Activated CD4-positive, alpha-beta T cell treated with anti-CD3 and anti-CD28 coated beads for 36 hours (primary cell): ENCODE measurements at regions of chr14 and their contacts with region 1.

Region 1: GRCh38 chr14:105093431-105094192 is 28.4 kb upstream of the GPR132 start:
- DNase-seq: peak; percentile 88
- ATAC-seq: peak; percentile 71
- H3K4me3 Mint-ChIP-seq: peak overlapping the region; percentile 65
- H3K27ac Mint-ChIP-seq: peak overlapping the region; percentile 31
- H3K4me1 Mint-ChIP-seq: peaks cover 5% of the 10 kb centered on the region
- H3K27me3 Mint-ChIP-seq: no peaks in the 10 kb centered on the region

Region 2: DNA sequence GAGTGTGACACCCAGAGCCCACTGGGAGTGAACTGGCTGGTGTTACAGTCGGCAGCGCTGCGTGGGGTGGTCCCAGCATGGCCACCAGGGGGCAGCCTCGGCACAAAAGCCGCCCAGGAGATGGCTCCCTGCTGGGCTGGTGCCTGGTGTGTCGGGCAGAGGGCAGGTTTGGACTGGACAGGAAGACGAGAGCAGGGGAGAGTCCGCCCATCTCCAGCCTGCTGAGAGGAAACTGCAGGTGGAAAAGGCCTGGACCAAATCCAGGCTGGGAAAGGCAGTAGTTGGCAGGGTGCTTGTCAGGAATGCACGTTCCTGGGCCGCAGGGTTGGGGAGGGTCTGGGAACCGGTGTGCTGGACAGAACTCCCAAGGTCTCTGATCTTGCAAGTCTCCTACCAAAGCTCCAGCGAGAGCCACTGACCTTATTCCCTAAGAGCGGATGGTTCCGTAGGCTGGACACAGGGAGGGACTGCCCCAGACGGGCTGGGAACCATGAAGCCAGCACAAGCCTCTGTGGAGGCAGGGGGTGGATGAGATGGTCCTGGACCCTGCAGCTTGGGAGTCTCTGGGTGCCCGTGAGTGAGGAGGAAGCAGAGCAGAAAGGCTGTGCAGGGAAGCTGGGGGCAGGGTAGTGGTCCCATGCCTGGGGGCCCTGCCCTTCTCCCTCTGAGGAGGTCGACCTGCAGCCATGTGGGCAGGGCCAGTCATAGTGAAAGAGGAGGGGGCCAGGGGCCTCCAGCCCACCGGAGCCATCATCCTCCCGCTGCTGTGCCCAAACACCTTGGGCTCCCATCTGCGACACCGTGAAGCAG is 117.2 kb before region 1 on chr14:
- CTCF ChIA-PET with region 1: no interaction called
- POLR2A ChIA-PET with region 1: no interaction called
- intact Hi-C with region 1: no loop called
- DNase-seq: peak; percentile 92
- ATAC-seq: peak; percentile 86
- H3K4me3 Mint-ChIP-seq: peak overlapping the region; percentile 19
- H3K27ac Mint-ChIP-seq: no peak overlapping the region
- H3K4me1 Mint-ChIP-seq: peaks cover 6% of the 10 kb centered on the region
- H3K27me3 Mint-ChIP-seq: peaks cover 16% of the 10 kb centered on the region

Region 3: DNA sequence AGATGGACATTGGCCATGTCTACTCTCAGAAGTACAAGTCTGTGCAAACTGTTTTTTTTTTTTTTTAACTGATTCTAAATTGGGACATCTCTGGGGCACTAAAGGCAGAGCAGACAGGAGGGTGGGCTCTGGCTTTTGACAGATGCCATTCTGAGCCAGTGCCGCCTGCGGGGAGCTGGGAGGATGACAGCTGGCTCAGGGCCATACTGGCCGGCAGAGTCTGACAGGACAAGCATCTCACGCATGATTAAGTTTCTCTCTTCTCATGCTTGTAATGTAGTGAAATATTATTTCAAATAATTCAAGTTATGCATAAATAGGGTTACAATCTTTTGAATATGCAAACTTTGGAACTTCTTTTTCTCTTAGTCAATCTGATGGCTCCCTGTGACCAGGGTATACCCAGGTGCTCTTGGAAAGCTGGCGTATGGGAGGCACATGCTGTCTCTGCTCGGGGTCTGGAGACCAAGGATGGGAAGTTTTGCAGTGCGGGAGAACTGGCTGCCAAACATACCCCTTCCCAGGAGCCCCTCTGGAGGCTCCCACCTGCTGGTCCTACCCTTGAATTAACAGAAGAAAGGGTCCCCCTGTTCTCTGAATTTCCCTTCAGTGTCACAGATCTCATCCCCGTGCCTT is 80.3 kb before region 1 on chr14:
- CTCF ChIA-PET with region 1: no interaction called
- POLR2A ChIA-PET with region 1: no interaction called
- intact Hi-C with region 1: no loop called
- DNase-seq: no peak
- ATAC-seq: no peak
- H3K4me3 Mint-ChIP-seq: no peak overlapping the region
- H3K27ac Mint-ChIP-seq: peak overlapping the region; percentile 27
- H3K4me1 Mint-ChIP-seq: peaks cover 41% of the 10 kb centered on the region
- H3K27me3 Mint-ChIP-seq: no peaks in the 10 kb centered on the region

Region 4: DNA sequence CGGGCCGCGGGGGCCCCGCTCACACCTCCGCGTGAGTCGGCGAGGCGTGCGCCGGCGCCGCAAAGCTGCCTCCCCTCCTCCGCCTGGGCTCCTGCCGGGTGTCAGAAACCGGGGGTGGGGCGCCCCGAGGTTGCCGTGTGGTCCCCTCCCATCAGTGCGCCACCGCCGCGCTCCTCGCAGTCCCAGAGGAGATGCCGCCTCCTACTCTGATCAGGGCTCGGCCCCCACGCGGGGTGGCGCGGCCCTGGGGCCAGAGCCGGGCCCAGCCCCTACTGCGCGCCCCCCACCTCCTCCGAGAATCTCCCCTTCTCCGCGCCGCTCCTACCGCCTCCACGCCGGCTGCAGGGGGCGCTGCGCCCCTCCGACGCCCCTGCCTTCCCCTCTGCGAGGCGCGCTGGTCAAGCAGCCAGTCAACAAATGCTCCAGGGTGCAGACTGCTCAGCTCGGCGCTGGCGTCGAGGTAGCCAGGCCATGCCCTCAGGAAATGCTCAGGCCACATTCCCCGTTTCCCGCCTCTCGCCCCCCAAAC is 75.4 kb after region 1 on chr14:
- CTCF ChIA-PET with region 1: interaction called, 3 read pairs
- POLR2A ChIA-PET with region 1: no interaction called
- intact Hi-C with region 1: loop called (anchors 1 to 5 kb)
- DNase-seq: peak; percentile 69
- ATAC-seq: peak; percentile 55
- H3K4me3 Mint-ChIP-seq: peak overlapping the region; percentile 53
- H3K27ac Mint-ChIP-seq: no peak overlapping the region
- H3K4me1 Mint-ChIP-seq: peaks cover 4% of the 10 kb centered on the region
- H3K27me3 Mint-ChIP-seq: peaks cover 6% of the 10 kb centered on the region

Region 5: DNA sequence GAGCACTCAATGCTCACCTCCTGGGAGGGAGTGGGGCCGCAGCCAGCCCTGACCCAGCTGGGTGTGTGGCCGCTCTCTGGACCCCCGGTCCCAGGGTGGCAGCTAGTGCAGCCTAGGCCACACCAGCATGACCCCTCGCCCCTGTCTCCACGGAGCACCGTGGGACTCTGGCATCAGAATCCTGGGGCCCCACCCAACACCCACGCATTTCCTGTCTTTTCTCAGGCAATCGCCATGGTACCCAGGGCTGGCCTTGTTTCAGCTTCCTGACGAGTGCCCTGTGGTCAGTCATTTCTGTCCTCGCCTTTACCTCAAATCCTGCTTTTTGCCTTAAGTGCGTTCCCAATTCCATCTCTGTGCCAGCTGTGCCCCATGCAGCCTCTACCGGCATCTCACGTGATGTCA is 236.9 kb after region 1 on chr14:
- CTCF ChIA-PET with region 1: no interaction called
- POLR2A ChIA-PET with region 1: no interaction called
- intact Hi-C with region 1: no loop called
- DNase-seq: peak; percentile 49
- ATAC-seq: peak; percentile 45
- H3K4me3 Mint-ChIP-seq: no peak overlapping the region
- H3K27ac Mint-ChIP-seq: no peak overlapping the region
- H3K4me1 Mint-ChIP-seq: peaks cover 28% of the 10 kb centered on the region
- H3K27me3 Mint-ChIP-seq: no peaks in the 10 kb centered on the region